KBM-7 (cell line): ENCODE measurements at regions of chr1 and their contacts with region 1.

Region 1: DNA sequence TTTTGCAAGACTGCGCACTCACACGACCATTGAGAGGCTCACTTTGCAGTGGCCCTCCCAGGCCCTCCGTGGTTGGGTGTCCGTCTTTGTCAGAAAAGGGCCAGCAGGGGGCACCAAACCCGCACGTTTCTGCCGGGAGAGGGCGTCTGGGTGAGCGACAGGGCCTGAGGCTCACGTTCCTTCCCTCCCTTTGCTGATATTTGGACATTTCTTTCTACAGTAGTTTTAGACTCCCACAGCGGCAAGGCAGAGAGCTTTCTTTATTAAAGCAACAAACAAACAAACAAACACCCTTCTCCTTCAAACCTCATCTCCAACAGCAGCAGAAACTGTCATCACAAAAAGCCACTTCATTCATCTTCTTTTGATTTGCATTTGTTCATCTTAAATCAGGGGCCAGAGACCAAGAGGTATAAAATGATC is 79.2 kb upstream of the WDR26 start:
- DNase-seq: peak; percentile 88

Region 2: DNA sequence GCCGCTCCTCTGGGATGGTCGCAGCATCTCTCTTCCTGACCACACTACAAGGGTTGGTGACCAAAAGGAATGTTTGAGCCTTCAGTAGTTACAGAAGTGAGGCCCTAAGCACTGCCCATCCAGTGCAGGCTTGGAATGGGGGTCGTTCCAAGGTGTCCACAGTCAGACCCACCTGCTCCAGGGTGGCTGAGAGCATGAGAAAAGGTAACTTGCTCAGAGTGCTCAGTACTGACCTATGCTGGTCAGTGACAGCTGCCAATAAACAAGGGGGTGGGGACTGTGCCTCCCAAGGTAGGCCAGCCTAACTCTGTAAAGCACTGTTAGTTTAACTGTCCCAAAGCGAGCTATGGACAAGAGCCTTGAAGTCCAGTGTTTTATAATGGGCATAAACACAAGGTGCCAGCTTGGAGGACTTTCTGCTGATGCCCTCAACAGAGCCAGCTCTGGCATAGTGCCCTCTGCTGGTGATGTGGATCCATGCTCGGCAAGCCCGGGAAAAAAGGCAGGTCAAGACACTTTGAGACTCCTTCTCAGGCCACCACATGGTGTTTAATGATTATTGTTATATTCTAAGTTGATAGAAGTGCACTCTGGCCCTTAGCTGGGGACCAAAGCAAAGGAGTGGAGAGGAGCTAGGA is 337.5 kb after region 1 on chr1:
- in situ Hi-C with region 1: loop called (anchors 25 kb)
- DNase-seq: peak; percentile 59